A673 (cell line): ENCODE measurements at regions of chr4 and their contacts with region 1.

Region 1: GRCh38 chr4:155620637-155621036 is 46.0 kb upstream of the GUCY1A1 start:
- DNase-seq: no peak
- H3K4me3 ChIP-seq: no peak overlapping the region
- H3K27ac ChIP-seq: no peak overlapping the region
- H3K4me1 ChIP-seq: no peaks in the 10 kb centered on the region
- H3K27me3 ChIP-seq: no peaks in the 10 kb centered on the region
- CTCF ChIP-seq: no peak

Region 2: GRCh38 chr4:155548173-155548572 is 72.5 kb before region 1 on chr4:
- CTCF ChIA-PET with region 1: no interaction called
- POLR2A ChIA-PET with region 1: no interaction called
- intact Hi-C with region 1: loop called (anchors 1 kb)
- DNase-seq: no peak
- H3K4me3 ChIP-seq: no peak overlapping the region
- H3K27ac ChIP-seq: no peak overlapping the region
- H3K4me1 ChIP-seq: no peaks in the 10 kb centered on the region
- H3K27me3 ChIP-seq: no peaks in the 10 kb centered on the region
- CTCF ChIP-seq: no peak